ENCODE measurements at regions of chr9 and their contacts with region 1.

Region 1: GRCh38 chr9:71001780-71002386 is 119.5 kb downstream of the TRPM3 start:
- H3K4me3 ChIP-seq: no peak overlapping the region
- H3K27ac ChIP-seq: no peak overlapping the region
- H3K4me1 ChIP-seq: no peaks in the 10 kb centered on the region
- CTCF ChIP-seq: 0 out of 2 replicates have a peak, but pooled peaks have one; percentile 31

Region 2: DNA sequence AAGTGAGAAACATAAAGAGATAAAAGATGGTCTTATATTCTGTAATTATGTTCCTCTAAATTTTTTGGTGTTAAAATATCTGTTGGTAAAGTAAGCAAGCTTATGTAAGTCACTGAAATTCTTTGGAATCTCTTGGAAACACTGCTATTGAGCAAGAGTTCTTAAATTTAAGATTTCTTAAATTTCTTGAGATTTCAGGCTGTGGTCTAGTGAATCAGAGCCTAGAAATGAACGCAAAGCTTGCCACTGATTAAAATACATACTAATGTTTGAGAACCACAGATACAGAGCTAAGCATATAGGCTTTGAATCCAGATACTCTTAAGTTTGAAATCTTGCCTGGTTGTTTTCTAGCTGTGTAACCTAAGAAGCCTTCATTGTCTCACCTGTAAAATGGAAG is 13.9 kb before region 1 on chr9:
- CTCF ChIA-PET with region 1: interaction called, 15 read pairs
- POLR2A ChIA-PET with region 1: no interaction called
- H3K4me3 ChIP-seq: no peak overlapping the region
- H3K27ac ChIP-seq: no peak overlapping the region
- H3K4me1 ChIP-seq: peaks cover 4% of the 10 kb centered on the region; the same call in 1 of the 2 replicates
- CTCF ChIP-seq: no peak

Region 3: DNA sequence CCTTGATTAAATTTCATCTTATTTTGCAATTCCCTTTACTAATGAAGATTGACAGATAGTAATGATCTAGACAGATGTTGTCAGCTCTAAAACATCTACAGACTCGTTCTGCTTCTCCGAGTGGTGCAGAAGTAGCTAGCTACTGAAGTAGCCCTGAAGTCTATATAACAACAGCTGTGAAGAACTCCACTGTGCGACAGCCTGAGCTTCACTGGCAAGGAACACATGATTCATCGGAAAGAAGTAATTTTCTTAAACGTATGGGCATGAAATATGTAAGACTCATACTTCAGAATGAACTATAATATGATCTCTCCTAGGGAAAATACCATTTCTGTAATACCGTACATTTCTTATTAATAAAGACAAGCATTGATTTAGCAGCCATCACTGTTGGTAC is 23.3 kb after region 1 on chr9:
- CTCF ChIA-PET with region 1: no interaction called
- POLR2A ChIA-PET with region 1: no interaction called
- H3K4me3 ChIP-seq: no peak overlapping the region
- H3K27ac ChIP-seq: no peak overlapping the region
- H3K4me1 ChIP-seq: no peaks in the 10 kb centered on the region
- CTCF ChIP-seq: no peak

Region 4: DNA sequence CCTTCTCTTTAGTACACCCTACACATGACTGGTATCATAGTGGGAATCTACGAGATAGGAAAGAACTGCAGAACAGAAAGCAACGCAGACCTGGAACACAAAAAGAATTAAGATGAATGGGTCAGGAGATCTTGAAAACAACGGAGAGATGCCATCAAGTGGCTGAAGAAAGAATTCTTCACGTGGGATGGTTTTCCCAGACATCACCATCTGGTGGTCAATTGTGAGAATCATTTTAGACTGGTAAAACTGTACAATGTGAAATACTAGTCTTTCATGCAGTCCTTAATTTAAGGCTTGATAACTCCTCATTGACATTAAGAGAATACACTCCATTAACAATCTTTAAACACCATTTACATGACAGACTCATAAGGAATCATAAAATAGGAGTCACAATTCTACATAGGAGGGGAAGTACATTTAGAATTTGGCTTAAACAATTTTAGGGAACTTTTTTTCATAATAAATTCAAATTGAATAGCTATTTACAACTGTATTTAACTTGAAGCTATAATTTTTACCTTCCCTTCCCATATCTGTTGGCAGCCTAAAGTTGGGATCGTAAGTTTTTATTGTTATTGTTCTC is 247.9 kb after region 1 on chr9:
- CTCF ChIA-PET with region 1: interaction called, 14 read pairs
- POLR2A ChIA-PET with region 1: no interaction called
- H3K4me3 ChIP-seq: no peak overlapping the region
- H3K27ac ChIP-seq: no peak overlapping the region
- H3K4me1 ChIP-seq: no peaks in the 10 kb centered on the region
- CTCF ChIP-seq: peak; percentile 71